Naive thymus-derived CD4-positive, alpha-beta T cell (primary cell): ENCODE measurements at regions of chr9 and their contacts with region 1.

Region 1: GRCh38 chr9:22037954-22038690 is 29.0 kb upstream of the CDKN2B start:
- DNase-seq: peak in 5 of 9 donors; percentile 7 to 39 (median 18)
- ATAC-seq: peak; percentile 63
- H3K4me3 ChIP-seq: no peak overlapping the region
- H3K4me3 Mint-ChIP-seq: no peak overlapping the region
- H3K27ac ChIP-seq: no peak overlapping the region
- H3K27ac Mint-ChIP-seq: no peak overlapping the region
- H3K4me1 ChIP-seq: peaks cover 0 to 5% of the 10 kb centered on the region in 2 donors
- H3K4me1 Mint-ChIP-seq: peaks cover 0 to 42% (median 4%) of the 10 kb centered on the region in 7 donors
- H3K27me3 ChIP-seq: no peaks in the 10 kb centered on the region
- H3K27me3 Mint-ChIP-seq: peaks cover 0 to 42% (median 0%) of the 10 kb centered on the region in 5 donors

Region 2: DNA sequence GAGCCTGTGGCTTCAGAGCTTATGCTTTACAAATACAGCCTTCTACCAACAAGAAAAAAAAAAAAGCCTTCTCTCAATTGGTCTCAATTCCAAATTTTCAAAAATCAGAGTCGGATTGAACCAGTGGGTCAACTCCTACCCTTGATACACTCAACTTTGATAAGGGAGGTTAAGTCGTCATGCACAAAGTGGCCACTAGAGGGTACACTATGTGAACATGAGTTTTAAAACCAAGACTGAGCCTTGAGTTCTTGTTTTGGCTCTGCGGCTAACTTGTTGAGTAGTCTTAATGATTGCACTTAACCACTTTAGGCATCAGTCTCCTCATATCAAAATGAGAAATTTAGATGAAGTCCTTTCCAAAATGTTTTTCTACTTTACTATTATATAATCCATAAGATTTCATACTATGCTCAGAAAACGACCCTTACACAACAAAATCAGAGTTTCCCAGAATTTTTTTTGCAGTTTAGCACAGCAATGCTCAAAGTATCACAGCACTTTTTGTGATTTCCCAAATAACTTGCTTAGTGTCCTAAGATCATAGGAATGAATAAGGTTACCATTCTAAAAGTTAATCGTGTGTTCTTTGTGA is 328.6 kb before region 1 on chr9:
- CTCF ChIA-PET with region 1: no interaction called
- POLR2A ChIA-PET with region 1: no interaction called
- intact Hi-C with region 1: loop called in 1 of 2 experiments (anchors 2 kb)
- DNase-seq: peak; percentile 14 to 56 (median 46)
- ATAC-seq: peak; percentile 88
- H3K4me3 ChIP-seq: no peak overlapping the region
- H3K4me3 Mint-ChIP-seq: no peak overlapping the region
- H3K27ac ChIP-seq: no peak overlapping the region
- H3K27ac Mint-ChIP-seq: no peak overlapping the region
- H3K4me1 ChIP-seq: no peaks in the 10 kb centered on the region
- H3K4me1 Mint-ChIP-seq: peaks cover 0 to 22% (median 15%) of the 10 kb centered on the region in 7 donors
- H3K27me3 ChIP-seq: no peaks in the 10 kb centered on the region
- H3K27me3 Mint-ChIP-seq: peaks cover 0 to 27% (median 0%) of the 10 kb centered on the region in 5 donors

Region 3: DNA sequence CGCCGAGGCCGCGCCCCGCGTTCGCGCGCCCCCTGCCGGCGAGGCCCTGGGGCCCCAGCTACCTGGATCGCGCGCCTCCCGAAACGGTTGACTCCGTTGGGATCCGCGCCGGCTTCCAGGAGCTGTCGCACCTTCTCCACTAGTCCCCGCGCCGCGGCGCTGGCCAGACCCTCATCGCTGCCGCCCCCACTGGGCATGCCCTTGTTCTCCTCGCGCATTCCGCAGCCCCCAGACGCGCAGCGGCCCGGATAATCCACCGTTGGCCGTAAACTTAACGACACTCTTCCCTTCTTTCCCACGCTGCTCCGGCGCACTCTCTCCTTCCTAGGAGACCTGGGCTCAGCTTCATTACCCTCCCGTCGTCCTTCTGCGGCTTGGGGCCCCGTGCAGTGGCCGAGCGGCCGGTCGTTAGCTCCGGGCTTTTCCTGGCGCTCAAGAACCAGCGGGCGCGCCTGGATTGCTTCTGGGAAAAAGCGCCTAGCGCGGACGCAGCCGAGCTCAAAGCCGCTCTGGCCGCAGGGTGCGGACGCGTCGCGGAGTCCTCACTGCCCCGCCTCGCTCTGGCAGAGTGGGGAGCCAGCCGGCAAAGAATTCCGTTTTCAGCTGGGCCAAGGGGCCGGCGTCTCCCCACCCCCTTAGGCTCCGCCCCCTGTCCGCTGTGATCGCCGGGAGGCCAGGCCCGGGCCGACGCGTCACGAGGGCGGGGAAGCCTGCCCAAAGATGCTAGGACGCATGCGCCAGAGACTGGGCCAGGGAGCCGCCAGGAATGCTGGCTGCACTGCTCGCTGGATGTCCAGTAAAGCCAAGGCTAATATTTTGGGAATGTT is 29.2 kb before region 1 on chr9 and contains the start of gene CDKN2B:
- CTCF ChIA-PET with region 1: interaction called, 5 read pairs
- POLR2A ChIA-PET with region 1: no interaction called
- intact Hi-C with region 1: loop called in 1 of 2 experiments (anchors 2 kb)
- DNase-seq: peak in 6 of 9 donors; percentile 30 to 82 (median 53)
- ATAC-seq: peak; percentile 90
- H3K4me3 ChIP-seq: peak within 1 kb of the TSS; percentile 57
- H3K4me3 Mint-ChIP-seq: peak within 1 kb of the TSS; percentile 46 to 86 (median 71)
- H3K27ac ChIP-seq: no peak within 1 kb of the TSS
- H3K27ac Mint-ChIP-seq: peak within 1 kb of the TSS in 2 of 9 donors; percentile 14 to 61
- H3K4me1 ChIP-seq: peaks cover 9 to 20% of the 10 kb centered on the region in 2 donors
- H3K4me1 Mint-ChIP-seq: peaks cover 17 to 32% (median 23%) of the 10 kb centered on the region in 7 donors
- H3K27me3 ChIP-seq: peaks cover 3 to 46% of the 10 kb centered on the region in 2 donors
- H3K27me3 Mint-ChIP-seq: peaks cover 67 to 84% (median 71%) of the 10 kb centered on the region in 5 donors
- total RNA-seq, gene CDKN2B: 0.32 to 4.1 (median 1.6) TPM in 3 of 5 experiments, not detected in the others

Region 4: DNA sequence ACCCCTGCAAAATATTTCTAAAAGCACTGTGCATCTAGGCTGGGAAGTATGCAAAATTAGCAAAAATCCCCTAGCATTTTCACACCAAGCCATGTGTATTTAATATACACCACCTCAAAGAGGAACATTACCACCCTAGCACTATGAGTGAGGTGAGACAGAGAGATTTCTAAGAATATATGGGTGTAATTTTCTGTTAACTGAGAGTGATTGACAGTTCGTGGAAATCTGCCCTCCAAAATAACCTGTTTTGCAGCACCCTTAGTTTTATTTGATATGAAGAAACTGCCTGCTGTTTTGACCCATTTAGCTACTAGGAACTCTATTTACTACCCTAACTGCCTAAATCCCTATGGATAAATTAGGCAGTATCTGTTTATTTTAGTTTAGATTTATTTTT is 35.2 kb after region 1 on chr9:
- CTCF ChIA-PET with region 1: no interaction called
- POLR2A ChIA-PET with region 1: no interaction called
- intact Hi-C with region 1: loop called in 1 of 2 experiments (anchors 5 kb)
- DNase-seq: no peak
- ATAC-seq: no peak
- H3K4me3 ChIP-seq: no peak overlapping the region
- H3K4me3 Mint-ChIP-seq: peak overlapping the region in 4 of 10 donors; percentile 15 to 63 (median 38)
- H3K27ac ChIP-seq: no peak overlapping the region
- H3K27ac Mint-ChIP-seq: peak overlapping the region in 3 of 9 donors; percentile 49 to 80 (median 53)
- H3K4me1 ChIP-seq: peaks cover 0 to 26% of the 10 kb centered on the region in 2 donors
- H3K4me1 Mint-ChIP-seq: peaks cover 15 to 57% (median 31%) of the 10 kb centered on the region in 7 donors
- H3K27me3 ChIP-seq: no peaks in the 10 kb centered on the region
- H3K27me3 Mint-ChIP-seq: peaks cover 0 to 44% (median 4%) of the 10 kb centered on the region in 5 donors

Region 5: GRCh38 chr9:22216730-22217160 is 178.6 kb after region 1 on chr9:
- CTCF ChIA-PET with region 1: no interaction called
- POLR2A ChIA-PET with region 1: no interaction called
- intact Hi-C with region 1: no loop called
- DNase-seq: no peak
- ATAC-seq: no peak
- H3K4me3 ChIP-seq: no peak overlapping the region
- H3K4me3 Mint-ChIP-seq: no peak overlapping the region
- H3K27ac ChIP-seq: no peak overlapping the region
- H3K27ac Mint-ChIP-seq: no peak overlapping the region
- H3K4me1 ChIP-seq: no peaks in the 10 kb centered on the region
- H3K4me1 Mint-ChIP-seq: peaks cover 0 to 3% (median 0%) of the 10 kb centered on the region in 7 donors
- H3K27me3 ChIP-seq: no peaks in the 10 kb centered on the region
- H3K27me3 Mint-ChIP-seq: peaks cover 0 to 24% (median 0%) of the 10 kb centered on the region in 5 donors

Region 6: GRCh38 chr9:22244141-22245011 is 206.3 kb after region 1 on chr9:
- CTCF ChIA-PET with region 1: no interaction called
- POLR2A ChIA-PET with region 1: no interaction called
- intact Hi-C with region 1: loop called (anchors 2 to 10 kb)
- DNase-seq: peak in 6 of 9 donors; percentile 5 to 35 (median 16)
- ATAC-seq: peak; percentile 84
- H3K4me3 ChIP-seq: no peak overlapping the region
- H3K4me3 Mint-ChIP-seq: peak overlapping the region in 6 of 10 donors; percentile 6 to 61 (median 38)
- H3K27ac ChIP-seq: no peak overlapping the region
- H3K27ac Mint-ChIP-seq: no peak overlapping the region
- H3K4me1 ChIP-seq: no peaks in the 10 kb centered on the region
- H3K4me1 Mint-ChIP-seq: peaks cover 0 to 20% (median 9%) of the 10 kb centered on the region in 7 donors
- H3K27me3 ChIP-seq: no peaks in the 10 kb centered on the region
- H3K27me3 Mint-ChIP-seq: peaks cover 5 to 55% (median 14%) of the 10 kb centered on the region in 5 donors